ENCODE measurements at regions of chr4 and their contacts with region 1.

Region 1: DNA sequence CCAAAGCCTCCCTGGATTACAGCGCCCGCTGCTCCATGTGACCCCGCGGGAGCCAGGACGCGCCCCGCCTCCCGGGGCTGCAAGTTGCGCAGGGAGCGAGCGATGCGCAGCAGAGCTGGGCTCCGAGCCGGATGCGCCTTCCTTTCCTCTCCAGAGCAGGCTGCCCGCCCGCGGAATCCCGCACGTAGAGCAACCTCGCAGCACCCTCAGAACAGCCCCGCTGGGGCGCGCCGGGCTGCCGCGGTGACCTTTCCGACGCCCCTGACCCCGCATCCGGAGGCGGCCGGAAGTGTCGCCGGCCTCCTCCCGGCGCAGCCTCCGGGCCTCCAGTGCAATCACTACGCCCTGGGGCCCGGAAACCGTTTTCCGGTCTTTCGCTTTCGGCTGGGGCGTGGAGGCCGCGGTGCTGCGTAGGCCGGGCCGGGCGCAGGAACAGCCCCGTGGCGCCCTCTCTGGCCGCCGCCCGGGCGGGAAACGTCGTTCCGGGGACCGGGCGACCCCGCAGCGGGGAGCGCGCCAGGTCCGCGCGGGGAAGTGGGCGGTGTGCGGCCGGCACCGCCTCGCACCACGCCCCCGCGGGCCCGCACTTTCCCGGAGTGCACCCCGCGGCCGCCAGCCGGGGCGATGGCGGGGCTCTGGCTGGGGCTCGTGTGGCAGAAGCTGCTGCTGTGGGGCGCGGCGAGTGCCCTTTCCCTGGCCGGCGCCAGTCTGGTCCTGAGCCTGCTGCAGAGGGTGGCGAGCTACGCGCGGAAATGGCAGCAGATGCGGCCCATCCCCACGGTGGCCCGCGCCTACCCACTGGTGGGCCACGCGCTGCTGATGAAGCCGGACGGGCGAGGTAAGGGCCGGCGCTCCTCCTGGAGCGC is at the start of gene CYP4V2:
- DNase-seq: peak; percentile 84 to 85
- ATAC-seq: peak; percentile 80 to 92 (median 88)
- H3K4me3 ChIP-seq: peak within 1 kb of the TSS; percentile 77 to 96 (median 90)
- H3K27ac ChIP-seq: peak within 1 kb of the TSS; percentile 91 to 99 (median 98)
- H3K4me1 ChIP-seq: peaks cover 6 to 45% (median 36%) of the 10 kb centered on the region in 9 donors
- H3K27me3 ChIP-seq: no peaks in the 10 kb centered on the region
- CTCF ChIP-seq: peak in 7 of 9 donors; percentile 35 to 70 (median 48)
- total RNA-seq, gene CYP4V2: 16.1 to 37.9 (median 25.9) TPM

Region 2: GRCh38 chr4:186067757-186068385 is 123.6 kb before region 1 on chr4:
- intact Hi-C with region 1: loop called in 4 of 10 experiments (anchors 5 to 10 kb)
- DNase-seq: peak; percentile 27 to 60
- ATAC-seq: peak; percentile 87 to 94 (median 90)
- H3K4me3 ChIP-seq: peak overlapping the region; percentile 36 to 68 (median 55)
- H3K27ac ChIP-seq: peak overlapping the region in 6 of 10 donors; percentile 17 to 72 (median 66)
- H3K4me1 ChIP-seq: peaks cover 0 to 21% (median 12%) of the 10 kb centered on the region in 9 donors
- H3K27me3 ChIP-seq: no peaks in the 10 kb centered on the region
- CTCF ChIP-seq: peak; percentile 12 to 70 (median 58)

Region 3: GRCh38 chr4:186074189-186074588 is 117.2 kb before region 1 on chr4:
- intact Hi-C with region 1: loop called in 4 of 10 experiments (anchors 5 to 10 kb)
- DNase-seq: no peak
- ATAC-seq: peak in 2 of 8 donors; percentile 30 to 34
- H3K4me3 ChIP-seq: no peak overlapping the region
- H3K27ac ChIP-seq: no peak overlapping the region
- H3K4me1 ChIP-seq: peaks cover 0 to 12% (median 4%) of the 10 kb centered on the region in 9 donors
- H3K27me3 ChIP-seq: no peaks in the 10 kb centered on the region
- CTCF ChIP-seq: no peak

Region 4: GRCh38 chr4:186144142-186144955 is 47.1 kb before region 1 on chr4:
- intact Hi-C with region 1: loop called in 1 of 10 experiments (anchors 5 kb)
- DNase-seq: peak; percentile 46 to 73
- ATAC-seq: peak; percentile 72 to 88 (median 77)
- H3K4me3 ChIP-seq: peak overlapping the region; percentile 44 to 74 (median 63)
- H3K27ac ChIP-seq: peak overlapping the region; percentile 13 to 83 (median 65)
- H3K4me1 ChIP-seq: peaks cover 0 to 19% (median 13%) of the 10 kb centered on the region in 9 donors
- H3K27me3 ChIP-seq: peaks cover 0 to 46% (median 0%) of the 10 kb centered on the region in 7 donors
- CTCF ChIP-seq: peak in 4 of 9 donors; percentile 12 to 17 (median 17)

Measured in heart right ventricle (tissue), 16 donors.